Left cardiac atrium (tissue), 4 donors: ENCODE measurements at regions of chrX and their contacts with region 1.

Region 1: DNA sequence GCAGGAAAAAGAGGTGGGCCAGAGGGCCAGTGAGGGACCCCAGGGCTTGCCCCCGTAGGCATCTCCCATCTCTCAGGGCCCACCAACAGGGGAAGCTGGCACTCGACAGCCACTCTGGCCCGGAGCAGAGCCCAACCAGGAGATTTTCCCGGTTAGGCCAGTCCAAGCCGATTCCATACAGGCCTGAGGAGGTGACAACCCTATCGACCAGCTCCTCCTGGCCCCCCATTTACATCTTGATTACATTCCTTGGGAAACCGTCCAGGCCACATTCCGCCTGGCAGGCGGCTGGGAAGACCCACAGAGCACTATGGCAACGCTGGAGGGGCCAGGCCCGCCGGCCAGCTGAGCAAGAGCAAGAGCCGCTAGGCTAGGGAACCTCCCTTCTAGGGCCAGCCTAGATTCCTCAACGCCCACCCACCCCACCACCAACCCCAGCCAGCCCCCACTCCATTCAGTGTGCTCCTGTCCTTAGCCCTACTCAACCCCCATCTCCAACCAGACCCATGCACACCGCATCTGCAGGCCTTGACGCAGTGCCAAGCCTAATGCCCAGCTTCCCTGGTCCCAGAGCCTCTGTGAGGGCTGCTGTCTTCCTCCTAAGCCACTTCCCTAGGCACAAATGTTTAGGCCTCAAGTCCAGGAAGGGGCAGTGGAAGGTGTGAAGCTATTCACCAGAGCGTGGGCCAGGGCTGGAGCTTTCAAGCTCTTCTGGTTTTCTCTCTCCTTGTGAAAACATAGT is 161.2 kb downstream of the EFNB1 start:
- DNase-seq: peak; percentile 66
- ATAC-seq: peak; percentile 85 to 86

Region 2: DNA sequence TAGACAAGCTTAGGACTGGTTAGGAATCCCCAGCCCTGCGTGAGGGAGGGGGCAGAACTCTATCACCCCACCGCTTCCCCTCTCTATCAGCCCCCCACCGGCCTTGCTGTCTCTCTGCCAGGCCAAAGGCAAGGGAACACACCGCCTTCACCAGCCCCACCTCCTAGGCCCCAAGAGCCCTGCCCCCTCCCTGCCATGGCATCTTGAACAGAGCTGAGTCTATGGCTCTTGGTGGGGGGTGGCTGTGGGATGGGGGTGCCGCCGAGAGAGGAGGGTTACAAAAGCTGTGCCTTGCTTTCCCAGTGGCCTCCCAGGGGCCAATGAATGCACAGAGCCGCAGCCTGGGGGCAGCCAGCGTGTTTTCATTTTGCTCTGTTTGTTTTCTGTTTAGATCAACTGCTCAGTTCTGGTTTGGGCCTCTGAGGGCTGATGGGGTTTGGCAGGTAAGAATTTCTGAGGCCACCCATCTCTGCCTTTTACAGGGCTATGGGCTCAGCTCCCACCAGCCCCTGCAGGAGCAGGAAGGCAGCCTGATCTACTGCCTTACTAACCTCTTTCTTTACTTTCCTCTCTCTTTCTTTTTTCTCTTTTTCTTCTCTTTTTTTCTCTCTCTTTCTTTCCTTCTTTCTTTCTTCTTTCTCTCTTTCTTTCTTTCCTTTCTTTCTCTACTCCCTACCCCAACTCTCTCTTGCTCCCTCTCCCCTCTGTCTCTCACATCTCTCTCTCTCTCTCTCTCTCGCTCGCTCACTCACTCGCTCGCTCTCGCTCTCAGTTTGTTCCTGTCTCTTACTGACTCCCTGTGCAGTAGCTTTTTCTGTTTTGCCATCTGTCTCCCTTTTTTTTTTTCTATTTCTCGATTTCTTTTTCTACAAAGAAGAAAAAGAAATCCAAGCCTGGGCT is 46.9 kb after region 1 on chrX:
- intact Hi-C with region 1: loop called in 1 of 2 experiments (anchors 5 kb)
- DNase-seq: no peak
- ATAC-seq: no peak